ENCODE measurements at regions of chr11 and their contacts with region 1.

Region 1: GRCh38 chr11:62340269-62340901 is 3.1 kb downstream of the ASRGL1 start:
- DNase-seq: peak; percentile 76
- H3K4me3 ChIP-seq: no peak overlapping the region
- H3K27ac ChIP-seq: peak overlapping the region; percentile 35
- H3K4me1 ChIP-seq: peaks cover 28% of the 10 kb centered on the region
- H3K27me3 ChIP-seq: peaks cover 0 to 5% of the 10 kb centered on the region in 2 experiments
- CTCF ChIP-seq: peak; percentile 71 to 74
- POLR2A ChIP-seq: no peak

Region 2: DNA sequence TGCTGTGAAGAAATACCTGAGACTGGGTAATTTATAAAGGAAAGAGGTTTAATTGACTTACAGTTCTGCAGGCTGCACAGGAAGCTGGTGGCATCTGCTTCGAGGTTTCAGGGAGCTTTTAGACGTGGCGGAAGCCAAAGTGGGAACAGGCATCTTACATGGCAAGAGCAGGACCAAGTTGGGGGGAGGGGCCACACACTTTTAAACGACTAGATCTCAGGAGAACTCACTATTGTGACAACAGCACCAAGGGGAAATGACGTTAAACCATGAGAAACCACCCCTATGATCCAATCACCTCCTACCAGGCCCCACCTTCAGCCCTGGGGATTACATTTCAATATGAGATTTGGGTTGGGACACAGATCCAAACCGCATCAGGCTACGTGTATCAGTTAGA is 30.4 kb before region 1 on chr11:
- CTCF ChIA-PET with region 1: interaction called, 11 read pairs
- POLR2A ChIA-PET with region 1: no interaction called
- dilution Hi-C with region 1: no loop called
- intact Hi-C with region 1: no loop called
- DNase-seq: no peak
- H3K4me3 ChIP-seq: no peak overlapping the region
- H3K27ac ChIP-seq: no peak overlapping the region
- H3K4me1 ChIP-seq: no peaks in the 10 kb centered on the region
- H3K27me3 ChIP-seq: peaks cover 16 to 21% of the 10 kb centered on the region in 2 experiments
- CTCF ChIP-seq: no peak
- POLR2A ChIP-seq: no peak

Region 3: DNA sequence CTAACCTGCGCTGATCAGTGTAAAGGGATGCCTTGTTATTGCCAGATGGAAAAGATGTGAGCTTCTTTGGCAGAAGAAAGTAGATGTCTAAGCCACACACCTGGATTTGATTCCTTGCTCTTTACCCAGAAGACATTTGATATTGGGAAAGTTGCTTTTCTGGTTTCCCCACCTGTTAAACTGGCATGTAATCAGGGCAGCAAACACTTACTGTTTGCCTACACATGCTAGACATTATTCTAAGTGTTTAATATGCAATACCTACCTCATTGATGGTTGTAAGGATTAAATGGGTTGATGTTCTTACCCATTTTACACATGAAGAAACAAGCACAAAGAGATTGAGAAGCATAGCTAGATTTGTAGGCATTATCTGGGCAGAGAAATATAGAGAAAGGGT is 13.5 kb after region 1 on chr11:
- CTCF ChIA-PET with region 1: interaction called, 24 read pairs
- POLR2A ChIA-PET with region 1: no interaction called
- dilution Hi-C with region 1: no loop called
- intact Hi-C with region 1: no loop called
- DNase-seq: no peak
- H3K4me3 ChIP-seq: no peak overlapping the region
- H3K27ac ChIP-seq: no peak overlapping the region
- H3K4me1 ChIP-seq: no peaks in the 10 kb centered on the region
- H3K27me3 ChIP-seq: no peaks in the 10 kb centered on the region
- CTCF ChIP-seq: no peak
- POLR2A ChIP-seq: no peak

Region 4: DNA sequence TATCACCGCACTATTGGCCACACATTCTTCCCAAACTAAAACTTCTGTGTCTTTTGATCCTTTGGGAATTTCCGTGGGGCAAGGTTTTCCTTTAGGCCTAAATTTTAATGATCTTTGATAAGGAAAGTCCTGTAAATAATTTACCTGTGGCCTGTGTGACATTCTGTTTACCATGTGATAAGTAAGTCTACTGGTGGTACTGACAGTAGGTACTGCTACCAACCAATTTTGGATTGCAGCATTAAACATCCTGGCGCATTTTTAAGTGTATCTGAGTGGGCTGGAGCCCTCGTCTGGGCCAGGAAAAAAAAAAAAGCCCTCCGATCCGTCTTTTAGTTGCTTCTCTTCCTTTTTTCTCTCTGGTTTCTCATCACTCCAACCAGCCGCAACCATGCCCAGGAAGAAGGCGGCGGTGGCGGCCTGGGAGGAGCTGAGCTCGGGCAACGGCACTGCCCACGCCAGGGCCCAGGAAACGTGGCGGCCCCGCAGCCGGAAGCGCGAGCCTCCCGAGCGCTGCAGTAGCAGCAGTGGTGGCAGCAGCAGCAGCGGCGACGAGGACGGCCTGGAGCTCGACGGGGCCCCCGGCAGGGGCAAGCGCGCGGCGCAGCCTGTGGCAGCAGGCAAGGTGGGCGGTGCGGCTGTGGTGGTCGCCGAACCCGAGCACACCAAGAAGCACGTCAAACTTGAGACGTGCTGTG is 30.5 kb after region 1 on chr11:
- CTCF ChIA-PET with region 1: interaction called, 76 read pairs
- POLR2A ChIA-PET with region 1: no interaction called
- dilution Hi-C with region 1: no loop called
- intact Hi-C with region 1: no loop called
- DNase-seq: no peak
- H3K4me3 ChIP-seq: no peak overlapping the region
- H3K27ac ChIP-seq: no peak overlapping the region
- H3K4me1 ChIP-seq: no peaks in the 10 kb centered on the region
- H3K27me3 ChIP-seq: no peaks in the 10 kb centered on the region
- CTCF ChIP-seq: no peak
- POLR2A ChIP-seq: no peak

Measured in endothelial cell of umbilical vein (primary cell).